ENCODE measurements at regions of chr2 and their contacts with region 1.

Region 1: DNA sequence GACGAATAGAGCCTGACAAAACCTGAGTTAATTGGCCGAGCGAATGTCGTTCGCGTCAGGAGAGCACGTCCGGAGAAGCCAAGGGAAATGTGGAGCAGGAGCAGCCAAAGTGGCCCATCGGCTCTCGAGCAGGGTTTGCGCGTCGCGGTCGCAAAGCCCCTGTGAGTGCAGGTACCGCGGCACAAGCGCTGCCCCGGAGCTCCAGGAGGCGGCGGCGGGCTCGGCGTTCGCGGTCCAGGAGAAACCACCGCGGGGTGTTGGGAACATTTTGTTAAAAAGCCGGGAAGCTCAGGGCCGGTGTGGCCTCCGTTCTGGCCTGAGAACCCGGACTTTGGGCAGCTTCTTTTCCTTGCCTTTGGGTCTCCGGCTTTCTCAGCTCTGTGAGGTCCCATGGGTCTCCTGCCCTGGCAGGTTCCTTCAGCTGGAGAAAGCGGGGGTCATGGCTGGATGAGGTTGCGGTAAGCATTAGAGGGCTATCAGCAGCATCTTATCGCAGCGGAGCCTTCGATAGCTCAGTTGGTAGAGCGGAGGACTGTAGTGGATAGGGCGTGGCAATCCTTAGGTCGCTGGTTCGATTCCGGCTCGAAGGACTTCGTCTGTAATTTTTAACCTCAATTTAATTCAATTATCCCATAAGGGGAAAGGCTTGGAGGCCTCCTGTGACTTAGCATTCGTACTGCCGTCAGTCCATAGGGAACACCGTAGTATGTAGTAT is 1.0 kb upstream of the AGBL5 start:
- DNase-seq: peak; percentile 93
- ATAC-seq: peak; percentile 60
- H3K4me3 Mint-ChIP-seq: peak overlapping the region; percentile 97
- H3K27ac Mint-ChIP-seq: peak overlapping the region; percentile 99
- H3K4me1 Mint-ChIP-seq: peaks cover 28% of the 10 kb centered on the region
- H3K27me3 Mint-ChIP-seq: peaks cover 4% of the 10 kb centered on the region

Region 2: GRCh38 chr2:27032495-27033252 is 17.8 kb before region 1 on chr2 and contains the start of gene TMEM214:
- POLR2A ChIA-PET with region 1: interaction called, 23 read pairs
- DNase-seq: peak; percentile 87
- ATAC-seq: peak; percentile 96
- H3K4me3 Mint-ChIP-seq: peak within 1 kb of the TSS; percentile 98
- H3K27ac Mint-ChIP-seq: peak within 1 kb of the TSS; percentile 90
- H3K4me1 Mint-ChIP-seq: peaks cover 26% of the 10 kb centered on the region
- H3K27me3 Mint-ChIP-seq: no peaks in the 10 kb centered on the region
- total RNA-seq, gene TMEM214: 68.1 to 70.8 TPM

Region 3: GRCh38 chr2:27065128-27065527 is 14.7 kb after region 1 on chr2:
- POLR2A ChIA-PET with region 1: interaction called, 11 read pairs
- DNase-seq: no peak
- ATAC-seq: no peak
- H3K4me3 Mint-ChIP-seq: no peak overlapping the region
- H3K27ac Mint-ChIP-seq: no peak overlapping the region
- H3K4me1 Mint-ChIP-seq: peaks cover 20% of the 10 kb centered on the region
- H3K27me3 Mint-ChIP-seq: no peaks in the 10 kb centered on the region

Region 4: GRCh38 chr2:27071277-27071989 is 21.0 kb after region 1 on chr2 and contains the start of gene OST4:
- POLR2A ChIA-PET with region 1: interaction called, 92 read pairs
- DNase-seq: peak; percentile 92
- ATAC-seq: peak; percentile 89
- H3K4me3 Mint-ChIP-seq: peak within 1 kb of the TSS; percentile 93
- H3K27ac Mint-ChIP-seq: peak within 1 kb of the TSS; percentile 92
- H3K4me1 Mint-ChIP-seq: peaks cover 52% of the 10 kb centered on the region
- H3K27me3 Mint-ChIP-seq: no peaks in the 10 kb centered on the region
- total RNA-seq, gene OST4: 302 to 325 TPM

Region 5: DNA sequence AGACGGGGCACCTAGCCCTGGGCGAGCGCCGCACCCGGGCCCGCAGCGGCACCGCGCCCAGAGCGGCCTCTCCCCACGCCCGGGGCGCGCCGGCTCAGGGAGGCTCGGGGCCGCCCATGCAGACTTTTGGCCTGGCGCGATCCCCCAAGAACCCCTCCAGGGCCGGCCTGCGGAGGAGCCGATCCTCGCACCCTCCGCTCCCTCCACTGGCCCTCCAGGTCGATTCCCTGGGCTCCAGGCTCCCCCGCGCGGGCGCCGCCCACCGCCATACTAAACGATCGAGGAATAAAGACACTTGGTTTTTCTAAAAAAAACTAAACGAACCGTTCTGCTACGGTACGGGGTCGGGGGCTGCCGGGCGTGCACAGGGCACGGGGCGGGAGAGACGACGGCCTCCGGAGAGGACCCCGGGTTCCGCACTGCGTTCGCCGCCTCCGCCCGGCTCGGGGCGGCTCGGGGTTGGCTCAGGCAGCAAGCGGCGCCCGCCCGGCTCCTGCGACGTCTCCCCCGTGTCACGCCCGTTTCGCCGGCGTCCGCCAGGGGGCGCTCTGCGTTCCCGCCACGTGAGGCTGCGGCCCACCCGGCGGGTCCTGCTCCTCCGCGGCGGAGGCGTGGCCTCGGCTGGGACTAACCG is 35.8 kb after region 1 on chr2:
- POLR2A ChIA-PET with region 1: interaction called, 61 read pairs
- DNase-seq: peak; percentile 100
- ATAC-seq: peak; percentile 89
- H3K4me3 Mint-ChIP-seq: peak overlapping the region; percentile 89
- H3K27ac Mint-ChIP-seq: peak overlapping the region; percentile 88
- H3K4me1 Mint-ChIP-seq: peaks cover 29% of the 10 kb centered on the region
- H3K27me3 Mint-ChIP-seq: no peaks in the 10 kb centered on the region